ENCODE measurements at regions of chr9 and their contacts with region 1.

Region 1: DNA sequence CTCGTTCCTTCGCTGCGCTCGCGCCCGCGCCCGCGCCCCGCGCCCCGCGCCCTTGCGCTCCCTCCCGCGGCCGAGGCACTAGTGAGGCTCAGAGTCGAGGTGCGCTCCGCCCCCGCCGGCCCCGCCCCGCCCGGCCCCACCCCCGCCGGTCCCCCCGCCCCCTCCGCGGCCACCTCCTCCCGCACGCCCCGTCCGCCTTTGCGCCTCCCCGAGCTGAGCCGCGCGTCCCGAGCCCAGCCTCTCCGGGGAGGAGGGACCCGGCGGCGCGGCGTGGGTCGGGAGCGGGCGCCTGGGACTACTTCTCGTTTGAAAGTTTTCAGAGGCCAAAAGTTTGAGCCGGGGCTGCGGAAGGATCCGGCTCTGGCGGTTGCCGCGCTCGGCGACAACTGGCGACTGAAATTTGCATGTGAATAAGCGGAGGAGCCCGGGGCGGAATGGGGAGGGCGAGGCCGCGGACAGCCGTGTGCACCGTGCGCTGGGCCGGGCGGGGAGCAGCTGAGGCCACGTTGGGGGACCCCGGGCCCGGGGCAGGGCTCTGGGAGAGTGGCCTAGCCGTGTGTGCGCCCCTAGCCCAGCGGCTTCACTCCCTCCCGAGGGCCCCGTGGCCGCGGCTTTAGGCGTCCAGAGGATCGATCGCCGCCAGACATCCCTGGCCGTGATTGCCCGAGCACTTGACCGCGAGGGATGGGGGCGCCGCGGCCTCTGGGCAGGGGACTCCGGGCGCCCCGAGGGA is at the start of gene NOTCH1:
- DNase-seq: peak; percentile 89 to 92
- H3K4me3 ChIP-seq: peak within 1 kb of the TSS; percentile 80 to 83 (median 82)
- H3K27ac ChIP-seq: peak within 1 kb of the TSS; percentile 93 to 99
- H3K4me1 ChIP-seq: peaks cover 12 to 23% of the 10 kb centered on the region in 2 donors
- H3K27me3 ChIP-seq: no peaks in the 10 kb centered on the region
- CTCF ChIP-seq: no peak
- POLR2A ChIP-seq: no peak
- total RNA-seq, gene NOTCH1: 12.6 to 33.8 (median 21.1) TPM

Region 2: DNA sequence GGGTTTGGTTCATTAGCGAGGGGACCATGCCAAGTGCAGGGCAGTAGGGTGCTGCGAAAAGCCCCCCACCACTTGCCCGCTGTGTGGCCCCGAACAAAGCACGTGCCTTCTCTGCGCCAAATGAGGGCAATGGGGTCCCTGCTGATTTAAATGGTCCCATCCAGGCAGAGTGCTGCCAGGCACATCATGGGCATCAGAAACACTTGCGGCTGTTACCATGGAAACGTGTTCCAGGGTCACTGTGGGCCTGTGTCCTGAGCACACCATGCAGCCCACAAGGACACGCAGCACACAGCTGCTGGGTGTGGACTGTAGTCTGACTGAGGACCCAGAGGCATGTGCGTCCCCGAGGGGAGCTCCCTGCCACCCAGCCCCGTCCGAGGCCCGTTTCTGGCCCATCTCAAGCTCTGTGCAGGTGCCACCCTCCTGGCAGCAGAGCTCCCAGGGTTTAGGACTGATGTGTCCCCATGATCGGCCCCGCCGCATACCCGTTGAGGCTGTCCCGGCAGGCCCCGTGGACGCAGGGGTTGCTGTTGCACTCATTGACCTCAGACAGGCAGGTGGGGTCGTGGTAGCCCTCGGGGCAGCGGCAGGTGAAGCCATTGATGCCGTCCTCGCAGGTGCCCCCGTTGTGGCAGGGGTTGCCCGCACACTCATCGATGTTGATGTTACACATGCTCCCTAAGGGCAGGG is 32.0 kb before region 1 on chr9:
- intact Hi-C with region 1: loop called (anchors 1 kb)
- DNase-seq: no peak
- H3K4me3 ChIP-seq: no peak overlapping the region
- H3K27ac ChIP-seq: no peak overlapping the region
- H3K4me1 ChIP-seq: no peaks in the 10 kb centered on the region
- H3K27me3 ChIP-seq: no peaks in the 10 kb centered on the region
- CTCF ChIP-seq: no peak
- POLR2A ChIP-seq: no peak

Measured in breast epithelium (tissue), 4 donors.